Sigmoid colon (tissue), 7 donors: ENCODE measurements at regions of chr2 and their contacts with region 1.

Region 1: GRCh38 chr2:68251187-68251854 is 1.0 kb downstream of the PPP3R1 start:
- DNase-seq: peak; percentile 87
- H3K4me3 ChIP-seq: peak overlapping the region; percentile 84 to 91 (median 88)
- H3K27ac ChIP-seq: peak overlapping the region; percentile 95 to 99 (median 98)
- H3K4me1 ChIP-seq: peaks cover 0 to 54% (median 48%) of the 10 kb centered on the region in 4 donors
- H3K27me3 ChIP-seq: no peaks in the 10 kb centered on the region
- CTCF ChIP-seq: peak; percentile 58 to 73 (median 71)
- EP300 ChIP-seq: no peak
- POLR2A ChIP-seq: no peak

Region 2: DNA sequence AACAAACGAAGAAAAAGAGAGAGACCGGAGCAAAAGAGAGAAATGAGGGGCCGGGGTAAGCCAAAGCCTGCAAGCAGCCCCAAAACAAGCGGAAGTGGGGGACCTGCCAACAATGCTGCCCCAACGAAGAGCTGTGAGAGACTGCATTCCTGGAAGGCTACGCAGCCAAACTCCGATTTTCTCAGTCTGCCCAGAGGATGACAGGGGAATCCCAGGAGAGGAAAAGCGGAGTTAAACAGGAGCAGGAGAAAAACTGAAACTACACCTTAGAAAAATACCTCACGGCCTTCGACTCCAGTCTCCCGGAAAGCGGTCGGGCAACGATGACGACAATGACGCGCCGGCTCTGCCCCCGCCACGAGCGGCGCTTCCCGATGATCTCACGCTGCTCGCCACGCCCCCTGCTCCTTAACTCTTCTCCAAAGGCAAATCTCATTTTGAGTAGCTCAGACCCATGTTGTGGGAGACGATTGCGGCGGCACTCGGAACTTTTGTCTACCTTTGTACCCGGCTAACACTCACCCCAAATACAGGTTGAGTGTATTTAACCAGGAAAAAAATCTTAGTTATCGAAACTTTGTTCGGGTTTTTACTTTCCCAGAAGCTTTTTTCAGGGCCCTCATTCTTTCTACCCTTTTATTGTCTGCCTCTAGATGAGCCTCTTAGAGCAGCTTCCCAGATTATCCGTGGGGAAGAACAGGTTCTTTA is 188.5 kb before region 1 on chr2 and contains the start of gene C1D:
- intact Hi-C with region 1: loop called (anchors 2 kb)
- DNase-seq: peak; percentile 96
- H3K4me3 ChIP-seq: peak within 1 kb of the TSS; percentile 64 to 84 (median 75)
- H3K27ac ChIP-seq: peak within 1 kb of the TSS; percentile 82 to 88 (median 86)
- H3K4me1 ChIP-seq: peaks cover 0 to 29% (median 26%) of the 10 kb centered on the region in 4 donors
- H3K27me3 ChIP-seq: no peaks in the 10 kb centered on the region
- CTCF ChIP-seq: no peak
- EP300 ChIP-seq: peak in 1 of 4 donors; percentile 29
- POLR2A ChIP-seq: peak in 1 of 2 donors; percentile 33
- total RNA-seq, gene C1D: 37.9 to 77.0 (median 43.6) TPM

Region 3: DNA sequence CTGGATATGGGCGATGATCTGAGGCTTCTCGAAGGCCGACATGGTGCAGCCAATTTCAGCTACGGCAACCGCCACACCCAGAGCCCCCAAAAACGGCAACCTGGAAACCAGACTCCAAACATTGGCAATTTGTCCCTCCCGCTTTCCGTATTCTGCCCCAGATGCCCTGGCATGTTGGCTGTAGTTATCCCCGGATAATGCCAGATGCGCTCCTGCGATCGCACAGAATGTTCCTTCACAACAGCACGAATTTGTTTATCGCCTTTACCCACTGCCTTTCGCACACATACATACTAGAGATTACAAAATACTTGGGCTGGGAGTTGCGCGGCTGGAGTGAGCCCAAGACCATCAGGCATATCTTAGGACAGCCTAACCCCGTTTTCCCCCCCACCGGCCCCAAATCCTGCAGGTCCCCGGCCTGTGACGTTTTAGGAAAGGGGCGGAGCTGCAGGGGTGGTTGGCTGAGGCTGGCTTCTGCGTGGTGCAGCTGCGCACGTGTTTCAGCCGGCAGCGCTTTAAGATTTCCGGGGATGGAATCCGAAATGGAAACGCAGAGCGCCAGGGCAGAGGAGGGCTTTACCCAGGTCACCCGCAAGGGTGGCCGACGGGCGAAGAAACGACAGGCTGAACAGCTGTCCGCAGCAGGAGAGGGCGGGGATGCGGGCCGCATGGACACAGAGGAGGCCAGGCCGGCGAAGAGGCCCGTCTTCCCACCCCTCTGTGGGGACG is 93.8 kb before region 1 on chr2 and contains the start of gene PNO1:
- intact Hi-C with region 1: loop called (anchors 1 kb)
- DNase-seq: peak; percentile 98
- H3K4me3 ChIP-seq: peak within 1 kb of the TSS; percentile 74 to 93 (median 78)
- H3K27ac ChIP-seq: peak within 1 kb of the TSS; percentile 84 to 93 (median 86)
- H3K4me1 ChIP-seq: peaks cover 0 to 32% (median 25%) of the 10 kb centered on the region in 4 donors
- H3K27me3 ChIP-seq: no peaks in the 10 kb centered on the region
- CTCF ChIP-seq: no peak
- EP300 ChIP-seq: peak in 1 of 4 donors; percentile 71
- POLR2A ChIP-seq: no peak
- total RNA-seq, gene PNO1: 9.1 to 20.7 (median 17.2) TPM

Region 4: GRCh38 chr2:68185541-68186164 is 65.7 kb before region 1 on chr2:
- intact Hi-C with region 1: no loop called
- DNase-seq: no peak
- H3K4me3 ChIP-seq: no peak overlapping the region
- H3K27ac ChIP-seq: no peak overlapping the region
- H3K4me1 ChIP-seq: peaks cover 0 to 12% (median 0%) of the 10 kb centered on the region in 4 donors
- H3K27me3 ChIP-seq: no peaks in the 10 kb centered on the region
- CTCF ChIP-seq: peak in 1 of 4 experiments; percentile 26
- EP300 ChIP-seq: no peak
- POLR2A ChIP-seq: no peak

Region 5: DNA sequence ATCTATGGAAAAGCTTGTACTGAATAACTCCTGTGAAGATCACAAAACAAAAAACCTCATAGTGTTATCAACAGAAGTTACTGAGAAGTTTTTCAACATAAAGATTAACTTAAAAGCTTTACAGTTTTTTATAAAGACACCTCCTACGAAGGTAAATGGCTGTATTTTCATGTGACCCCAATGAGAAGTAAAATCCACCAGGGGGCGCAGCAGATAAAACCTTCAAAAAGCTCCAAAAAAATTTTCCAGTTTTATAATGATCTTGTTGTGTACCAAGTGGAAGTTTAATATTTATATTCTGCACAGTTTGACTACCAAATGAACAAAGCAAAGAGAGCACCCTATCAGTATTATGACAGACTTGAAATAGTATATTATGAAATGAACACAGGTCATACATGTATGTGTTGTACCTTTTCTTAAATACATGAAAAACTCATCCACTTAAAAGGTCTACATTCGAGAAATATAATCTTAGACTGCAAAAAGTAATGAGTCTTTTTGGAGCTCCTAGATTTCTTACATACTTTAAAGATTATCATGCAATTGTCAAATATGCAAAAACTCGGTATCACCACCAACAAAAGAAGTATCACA is 55.1 kb before region 1 on chr2:
- intact Hi-C with region 1: loop called (anchors 2 kb)
- DNase-seq: peak; percentile 71
- H3K4me3 ChIP-seq: no peak overlapping the region
- H3K27ac ChIP-seq: no peak overlapping the region
- H3K4me1 ChIP-seq: peaks cover 0 to 54% (median 30%) of the 10 kb centered on the region in 4 donors
- H3K27me3 ChIP-seq: no peaks in the 10 kb centered on the region
- CTCF ChIP-seq: peak in 2 of 4 experiments; percentile 25 to 49
- EP300 ChIP-seq: no peak
- POLR2A ChIP-seq: no peak

Region 6: GRCh38 chr2:68225119-68225632 is 26.1 kb before region 1 on chr2:
- intact Hi-C with region 1: no loop called
- DNase-seq: no peak
- H3K4me3 ChIP-seq: no peak overlapping the region
- H3K27ac ChIP-seq: peak overlapping the region in 3 of 4 donors; percentile 36 to 65 (median 60)
- H3K4me1 ChIP-seq: peaks cover 0 to 70% (median 59%) of the 10 kb centered on the region in 4 donors
- H3K27me3 ChIP-seq: no peaks in the 10 kb centered on the region
- CTCF ChIP-seq: no peak
- EP300 ChIP-seq: no peak
- POLR2A ChIP-seq: no peak

Region 7: DNA sequence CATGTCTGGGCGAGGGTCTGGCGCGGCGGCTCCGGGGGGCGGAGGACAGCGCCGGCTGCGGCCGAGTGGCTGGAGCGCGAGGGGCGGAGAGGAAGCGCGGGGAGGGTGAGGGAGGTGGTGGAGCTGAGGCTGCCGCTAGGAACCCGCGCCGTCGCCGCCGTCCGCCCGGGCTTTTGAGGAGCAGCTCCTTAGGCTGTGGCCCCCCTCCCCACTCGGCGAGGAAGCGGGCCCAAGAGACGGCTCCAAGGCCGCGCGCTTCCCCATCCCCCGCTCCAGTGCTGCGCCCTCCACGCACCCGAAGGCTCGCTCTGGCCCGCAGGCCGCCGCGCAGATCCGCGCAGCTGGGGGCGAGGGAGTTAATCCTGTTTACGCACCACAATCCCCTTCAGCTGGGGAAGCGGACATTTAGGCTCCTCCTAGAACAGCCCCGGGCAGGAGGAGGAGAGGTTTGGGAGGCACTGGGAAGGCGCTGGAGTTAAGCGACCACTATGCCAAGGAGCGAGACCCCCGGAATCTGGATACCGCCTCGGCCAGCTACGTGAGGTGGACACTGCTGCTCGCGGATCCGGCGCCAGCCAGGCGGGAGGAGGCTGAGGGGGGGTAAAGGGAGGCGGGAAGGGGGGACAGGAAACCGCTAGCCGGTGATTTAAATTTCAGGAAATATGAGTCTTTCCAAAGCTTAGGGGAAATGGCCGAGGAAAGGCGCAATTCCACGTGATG is 68.2 kb after region 1 on chr2 and contains the start of gene CNRIP1:
- intact Hi-C with region 1: loop called (anchors 5 kb)
- DNase-seq: peak; percentile 91
- H3K4me3 ChIP-seq: peak within 1 kb of the TSS; percentile 66 to 87 (median 80)
- H3K27ac ChIP-seq: peak within 1 kb of the TSS; percentile 81 to 92 (median 86)
- H3K4me1 ChIP-seq: peaks cover 0 to 20% (median 9%) of the 10 kb centered on the region in 4 donors
- H3K27me3 ChIP-seq: no peaks in the 10 kb centered on the region
- CTCF ChIP-seq: no peak
- EP300 ChIP-seq: no peak
- POLR2A ChIP-seq: peak; percentile 43 to 52
- total RNA-seq, gene CNRIP1: 22.5 to 38.2 (median 32.6) TPM

Region 8: DNA sequence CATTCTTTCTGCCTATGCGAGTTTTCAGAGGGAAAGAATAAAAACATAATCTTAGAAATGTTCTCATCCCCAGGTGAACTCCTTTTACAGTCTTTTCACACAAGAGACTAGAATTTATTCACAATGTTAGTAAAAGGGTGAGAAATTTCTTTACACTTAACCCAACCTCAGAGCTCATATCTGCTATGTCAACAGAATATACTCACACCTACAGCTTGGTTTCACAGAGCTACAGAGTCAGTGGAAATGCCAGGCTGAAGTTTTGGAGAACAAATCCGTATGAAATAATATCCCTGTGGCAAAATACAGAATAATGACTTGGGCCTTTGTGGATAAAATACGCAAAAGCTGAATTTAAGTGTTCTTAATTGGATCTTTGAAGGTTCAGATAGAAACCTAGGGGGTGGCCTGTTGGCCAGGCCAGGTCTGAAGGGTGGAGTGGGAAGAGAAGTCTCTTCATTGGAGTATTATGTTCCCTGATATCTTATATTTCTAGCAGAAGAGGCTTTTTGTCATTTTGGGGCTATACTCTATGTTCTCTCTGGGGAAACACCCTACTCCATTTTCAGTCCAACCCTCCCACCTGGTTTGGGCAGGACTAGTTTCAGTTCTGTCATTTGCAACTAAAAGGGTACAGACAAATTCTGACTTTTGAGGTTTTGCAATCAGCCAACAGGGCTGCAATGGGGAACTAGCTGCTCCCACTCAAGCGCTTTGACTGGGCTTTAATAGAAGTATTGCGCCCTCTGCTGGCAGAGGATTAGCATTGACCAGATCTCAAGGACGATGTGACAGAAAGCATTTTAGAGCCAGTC is 190.1 kb after region 1 on chr2:
- intact Hi-C with region 1: loop called (anchors 10 kb)
- DNase-seq: peak; percentile 93
- H3K4me3 ChIP-seq: no peak overlapping the region
- H3K27ac ChIP-seq: peak overlapping the region in 3 of 4 donors; percentile 12 to 55 (median 40)
- H3K4me1 ChIP-seq: peaks cover 0 to 22% (median 14%) of the 10 kb centered on the region in 4 donors
- H3K27me3 ChIP-seq: no peaks in the 10 kb centered on the region
- CTCF ChIP-seq: peak; percentile 81 to 94 (median 89)
- EP300 ChIP-seq: no peak
- POLR2A ChIP-seq: no peak